Mammary epithelial cell (primary cell): ENCODE measurements at regions of chr10 and their contacts with region 1.

Region 1: GRCh38 chr10:66120160-66120559 is 805.7 kb upstream of the LRRTM3 start:
- DNase-seq: no peak
- H3K4me3 ChIP-seq: no peak overlapping the region
- H3K27ac ChIP-seq: no peak overlapping the region
- H3K4me1 ChIP-seq: no peaks in the 10 kb centered on the region
- H3K27me3 ChIP-seq: no peaks in the 10 kb centered on the region
- CTCF ChIP-seq: no peak

Region 2: GRCh38 chr10:66045859-66046258 is 74.3 kb before region 1 on chr10:
- CTCF ChIA-PET with region 1: interaction called, 12 read pairs
- dilution Hi-C with region 1: no loop called
- in situ Hi-C with region 1: no loop called
- intact Hi-C with region 1: no loop called
- DNase-seq: peak; percentile 50
- H3K4me3 ChIP-seq: no peak overlapping the region
- H3K27ac ChIP-seq: no peak overlapping the region
- H3K4me1 ChIP-seq: no peaks in the 10 kb centered on the region
- H3K27me3 ChIP-seq: no peaks in the 10 kb centered on the region
- CTCF ChIP-seq: no peak